ENCODE measurements at regions of chr14 and their contacts with region 1.

Region 1: DNA sequence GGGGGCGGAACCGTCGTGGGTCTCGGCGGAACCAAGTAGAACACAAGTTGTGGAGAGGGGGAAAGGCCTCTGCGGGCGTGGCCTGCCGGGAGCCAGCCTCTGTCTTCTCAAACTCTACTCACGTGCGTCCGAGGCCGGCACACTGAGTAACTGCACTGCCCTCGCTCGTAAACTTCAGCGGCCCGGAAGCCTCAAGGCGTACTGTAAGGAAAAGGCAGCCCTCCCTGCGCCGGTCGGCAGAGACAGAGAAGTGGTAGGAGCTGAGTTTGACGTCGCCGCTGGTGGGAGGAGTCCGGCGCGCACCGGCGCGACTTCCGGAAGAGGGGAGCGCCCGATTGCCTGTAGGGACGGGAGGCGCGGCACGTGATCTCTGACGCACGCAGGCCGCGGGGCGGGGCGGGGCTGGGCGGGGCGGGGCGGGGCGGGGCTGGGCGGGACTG is at the start of gene FBXO33:
- DNase-seq: peak; percentile 99
- H3K4me3 Mint-ChIP-seq: peak within 1 kb of the TSS; percentile 98
- H3K27ac Mint-ChIP-seq: peak within 1 kb of the TSS; percentile 100
- H3K4me1 Mint-ChIP-seq: peaks cover 32% of the 10 kb centered on the region
- H3K27me3 Mint-ChIP-seq: no peaks in the 10 kb centered on the region
- total RNA-seq, gene FBXO33: 17.9 and 18.9 TPM in 2 replicates

Region 2: GRCh38 chr14:39102969-39103957 is 328.9 kb before region 1 on chr14 and contains the start of gene SEC23A:
- intact Hi-C with region 1: loop called (anchors 2 kb)
- DNase-seq: peak; percentile 96
- H3K4me3 Mint-ChIP-seq: peak within 1 kb of the TSS; percentile 98
- H3K27ac Mint-ChIP-seq: peak within 1 kb of the TSS; percentile 99
- H3K4me1 Mint-ChIP-seq: peaks cover 32% of the 10 kb centered on the region
- H3K27me3 Mint-ChIP-seq: no peaks in the 10 kb centered on the region
- total RNA-seq, gene SEC23A: 63.5 and 65.8 TPM in 2 replicates

Region 3: GRCh38 chr14:39174560-39175444 is 257.4 kb before region 1 on chr14 and contains the start of gene PNN:
- intact Hi-C with region 1: loop called (anchors 1 kb)
- DNase-seq: peak; percentile 99
- H3K4me3 Mint-ChIP-seq: peak within 1 kb of the TSS; percentile 94
- H3K27ac Mint-ChIP-seq: peak within 1 kb of the TSS; percentile 96
- H3K4me1 Mint-ChIP-seq: peaks cover 34% of the 10 kb centered on the region
- H3K27me3 Mint-ChIP-seq: no peaks in the 10 kb centered on the region
- total RNA-seq, gene PNN: 121 and 128 TPM in 2 replicates

Region 4: DNA sequence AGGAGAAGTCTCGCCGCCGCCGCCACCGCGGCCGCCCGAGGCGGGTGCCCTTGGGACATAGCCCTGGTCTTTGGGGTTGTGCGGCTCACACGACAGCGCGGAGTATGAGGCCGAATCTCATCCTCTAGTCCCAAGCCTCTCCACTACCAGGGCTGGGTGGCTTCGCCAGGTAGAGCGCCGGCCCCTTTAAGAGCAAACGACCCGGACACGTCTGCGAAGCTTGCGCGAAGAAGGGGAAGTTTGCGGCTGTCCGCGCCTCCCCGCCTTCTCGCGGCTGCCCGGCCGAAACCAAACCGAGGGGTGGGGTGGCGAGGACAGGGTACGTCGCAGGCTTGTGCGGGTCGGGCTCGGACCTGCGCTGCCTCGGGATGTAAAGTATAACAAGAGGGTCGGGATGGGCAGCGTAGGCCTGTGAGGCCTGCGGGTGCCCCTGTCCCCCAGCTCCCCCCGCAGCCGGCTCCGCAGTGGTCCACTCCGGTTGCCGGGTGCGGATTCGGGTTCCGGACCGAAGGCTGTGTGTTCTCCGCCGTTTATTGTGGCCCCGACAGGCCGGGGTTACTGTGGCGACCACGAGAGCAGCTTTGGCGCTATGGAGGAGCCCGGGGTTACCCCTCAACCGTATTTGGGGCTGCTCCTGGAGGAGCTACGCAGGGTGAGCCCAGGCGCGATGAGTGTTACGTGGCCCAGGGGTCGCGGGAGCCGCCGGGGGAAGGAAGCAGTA is 165.2 kb before region 1 on chr14:
- intact Hi-C with region 1: loop called (anchors 1 kb)
- DNase-seq: peak; percentile 94
- H3K4me3 Mint-ChIP-seq: peak overlapping the region; percentile 82
- H3K27ac Mint-ChIP-seq: peak overlapping the region; percentile 81
- H3K4me1 Mint-ChIP-seq: peaks cover 39% of the 10 kb centered on the region
- H3K27me3 Mint-ChIP-seq: no peaks in the 10 kb centered on the region

Region 5: DNA sequence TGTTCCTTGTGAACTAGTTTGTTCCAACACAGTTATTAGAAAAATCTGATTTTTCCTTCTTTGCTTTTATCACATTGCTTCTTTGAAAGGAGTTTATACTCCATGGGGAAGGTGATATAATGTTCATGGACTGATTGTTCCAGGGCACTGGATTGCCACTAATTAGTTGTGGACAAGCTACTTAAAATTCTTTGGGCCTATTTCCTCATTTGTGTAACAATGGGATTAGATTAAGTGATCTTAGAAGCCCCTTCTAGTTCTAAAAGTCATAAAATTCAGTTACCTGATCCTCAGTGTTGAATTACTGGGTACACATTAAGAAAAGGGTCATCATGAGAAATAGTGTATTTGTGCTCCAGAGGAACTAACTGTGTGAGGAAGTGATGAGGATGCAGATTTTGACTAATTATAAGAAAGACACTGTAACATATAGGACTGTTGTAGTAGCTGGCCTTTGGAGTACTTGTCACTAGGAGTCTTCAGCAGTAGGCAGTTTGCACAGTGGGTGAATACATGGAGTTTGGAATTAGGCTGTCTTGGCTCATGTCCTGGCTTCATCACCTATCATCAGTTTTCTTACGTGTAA is 116.2 kb before region 1 on chr14:
- intact Hi-C with region 1: no loop called
- DNase-seq: no peak
- H3K4me3 Mint-ChIP-seq: no peak overlapping the region
- H3K27ac Mint-ChIP-seq: no peak overlapping the region
- H3K4me1 Mint-ChIP-seq: no peaks in the 10 kb centered on the region
- H3K27me3 Mint-ChIP-seq: no peaks in the 10 kb centered on the region

Region 6: GRCh38 chr14:39339003-39339402 is 93.2 kb before region 1 on chr14:
- intact Hi-C with region 1: no loop called
- DNase-seq: no peak
- H3K4me3 Mint-ChIP-seq: no peak overlapping the region
- H3K27ac Mint-ChIP-seq: no peak overlapping the region
- H3K4me1 Mint-ChIP-seq: peaks cover 14% of the 10 kb centered on the region
- H3K27me3 Mint-ChIP-seq: no peaks in the 10 kb centered on the region

Region 7: DNA sequence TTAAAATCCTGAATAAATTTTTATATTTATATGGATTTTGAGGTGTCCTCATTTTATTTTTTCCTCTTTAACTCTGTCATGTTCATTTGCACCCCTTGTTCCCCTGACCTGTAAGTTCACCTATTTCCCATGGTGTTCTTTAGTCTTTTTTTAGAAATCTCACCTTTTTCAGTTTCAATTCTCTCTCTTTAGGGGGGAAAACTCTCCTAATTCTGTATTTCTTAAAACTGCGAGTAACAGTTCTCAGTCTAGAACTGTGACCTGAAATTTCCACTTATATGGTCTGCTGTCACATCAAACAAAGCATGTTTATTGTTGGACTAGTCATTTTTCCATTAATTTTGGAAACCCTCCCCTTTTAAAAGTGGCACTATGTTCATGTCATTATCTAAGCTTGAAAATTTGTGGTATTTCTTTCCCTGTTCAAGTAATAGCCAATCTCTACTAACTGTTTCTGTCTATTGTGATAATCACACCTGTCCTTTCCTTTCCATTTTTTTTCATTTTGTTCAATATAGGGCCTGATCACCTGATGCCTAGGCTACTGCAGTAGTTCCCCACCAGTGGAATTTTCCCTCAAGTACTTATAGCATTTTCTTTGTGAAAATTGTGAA is 14.0 kb after region 1 on chr14:
- intact Hi-C with region 1: loop called (anchors 1 kb)
- DNase-seq: no peak
- H3K4me3 Mint-ChIP-seq: peak overlapping the region; percentile 11
- H3K27ac Mint-ChIP-seq: peak overlapping the region; percentile 85
- H3K4me1 Mint-ChIP-seq: peaks cover 32% of the 10 kb centered on the region
- H3K27me3 Mint-ChIP-seq: no peaks in the 10 kb centered on the region

Measured in activated CD4-positive, alpha-beta T cell treated with anti-CD3 and anti-CD28 coated beads, Interleukin-2, amount 10 ng/mL, durations not matched to agents 24 days and 14 days (primary cell).